ENCODE measurements at regions of chr7 and their contacts with region 1.

Region 1: GRCh38 chr7:7968543-7969305 is at the start of gene GLCCI1:
- DNase-seq: peak; percentile 96 to 98 (median 96)
- H3K4me3 ChIP-seq: peak within 1 kb of the TSS; percentile 96 to 99
- H3K4me3 Mint-ChIP-seq: peak within 1 kb of the TSS; percentile 92 to 100 (median 98)
- H3K27ac ChIP-seq: peak within 1 kb of the TSS; percentile 79
- H3K27ac Mint-ChIP-seq: peak within 1 kb of the TSS; percentile 66 to 99 (median 96)
- H3K4me1 ChIP-seq: peaks cover 50% of the 10 kb centered on the region
- H3K4me1 Mint-ChIP-seq: peaks cover 18 to 29% (median 18%) of the 10 kb centered on the region in 4 donors
- H3K27me3 ChIP-seq: no peaks in the 10 kb centered on the region
- H3K27me3 Mint-ChIP-seq: no peaks in the 10 kb centered on the region
- total RNA-seq, gene GLCCI1: 46.7 to 49.7 TPM

Region 2: DNA sequence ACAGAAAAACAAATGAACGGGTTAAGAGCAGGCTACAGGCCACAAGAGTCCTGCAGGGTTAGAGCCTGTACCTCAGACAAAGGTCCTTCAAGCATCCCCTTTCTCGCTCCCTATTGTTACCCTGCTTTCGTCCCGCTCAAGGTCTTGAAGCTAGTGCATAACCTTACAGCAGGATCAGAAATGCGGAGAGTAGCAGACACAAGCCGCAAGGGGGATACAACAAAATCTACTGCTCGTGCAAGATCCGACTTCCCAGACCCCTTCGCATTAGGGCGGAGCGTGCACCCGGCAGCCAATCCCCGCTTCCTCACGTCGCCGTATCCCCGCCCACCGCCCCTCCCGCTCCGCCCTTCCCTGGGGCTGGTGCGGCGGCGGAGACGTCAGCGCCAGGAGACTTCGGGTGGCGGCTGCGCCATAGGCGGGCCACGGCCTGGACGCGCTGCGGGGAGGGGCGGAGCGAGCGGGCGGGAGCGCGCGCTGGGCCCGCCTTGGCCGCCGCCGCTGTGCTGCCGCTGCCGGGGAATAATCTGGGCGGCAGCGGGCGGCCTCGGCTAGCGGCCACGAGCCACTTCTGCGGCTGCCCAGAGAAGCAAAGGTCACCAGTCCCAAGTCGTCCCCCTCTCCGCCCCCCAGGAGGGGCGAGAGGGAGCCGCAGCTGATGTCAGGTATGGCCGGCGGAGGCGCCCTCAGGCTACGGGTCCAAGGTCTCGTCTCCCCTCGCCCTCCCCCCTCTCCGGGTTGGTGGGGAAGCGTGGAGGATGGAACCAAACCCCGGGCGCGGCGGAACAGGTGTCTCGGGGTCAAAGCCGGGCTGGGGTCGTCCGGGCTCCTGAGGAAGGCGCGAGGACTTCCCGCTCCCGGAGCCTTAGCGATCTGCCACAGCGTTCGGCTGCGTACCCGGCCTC is 786.3 kb before region 1 on chr7 and contains the start of gene C1GALT1:
- CTCF ChIA-PET with region 1: no interaction called
- POLR2A ChIA-PET with region 1: interaction called, 4 read pairs
- intact Hi-C with region 1: loop called (anchors 2 kb)
- DNase-seq: peak; percentile 97 to 99 (median 98)
- H3K4me3 ChIP-seq: peak within 1 kb of the TSS; percentile 55 to 60
- H3K4me3 Mint-ChIP-seq: peak within 1 kb of the TSS; percentile 83 to 99 (median 94)
- H3K27ac ChIP-seq: peak within 1 kb of the TSS; percentile 96
- H3K27ac Mint-ChIP-seq: peak within 1 kb of the TSS; percentile 94 to 98 (median 97)
- H3K4me1 ChIP-seq: peaks cover 50% of the 10 kb centered on the region
- H3K4me1 Mint-ChIP-seq: peaks cover 12 to 21% (median 17%) of the 10 kb centered on the region in 4 donors
- H3K27me3 ChIP-seq: no peaks in the 10 kb centered on the region
- H3K27me3 Mint-ChIP-seq: no peaks in the 10 kb centered on the region
- total RNA-seq, gene C1GALT1: 54.6 to 54.8 TPM

Region 3: GRCh38 chr7:7681179-7681935 is 287.4 kb before region 1 on chr7:
- CTCF ChIA-PET with region 1: interaction called, 9 read pairs
- POLR2A ChIA-PET with region 1: interaction called, 9 read pairs
- intact Hi-C with region 1: loop called (anchors 5 kb)
- DNase-seq: peak; percentile 47 to 62 (median 54)
- H3K4me3 ChIP-seq: no peak overlapping the region
- H3K4me3 Mint-ChIP-seq: peak overlapping the region in 3 of 8 donors; percentile 21 to 51 (median 35)
- H3K27ac ChIP-seq: no peak overlapping the region
- H3K27ac Mint-ChIP-seq: peak overlapping the region in 5 of 7 donors; percentile 41 to 59 (median 45)
- H3K4me1 ChIP-seq: peaks cover 15% of the 10 kb centered on the region
- H3K4me1 Mint-ChIP-seq: peaks cover 18 to 35% (median 24%) of the 10 kb centered on the region in 4 donors
- H3K27me3 ChIP-seq: no peaks in the 10 kb centered on the region
- H3K27me3 Mint-ChIP-seq: no peaks in the 10 kb centered on the region

Region 4: DNA sequence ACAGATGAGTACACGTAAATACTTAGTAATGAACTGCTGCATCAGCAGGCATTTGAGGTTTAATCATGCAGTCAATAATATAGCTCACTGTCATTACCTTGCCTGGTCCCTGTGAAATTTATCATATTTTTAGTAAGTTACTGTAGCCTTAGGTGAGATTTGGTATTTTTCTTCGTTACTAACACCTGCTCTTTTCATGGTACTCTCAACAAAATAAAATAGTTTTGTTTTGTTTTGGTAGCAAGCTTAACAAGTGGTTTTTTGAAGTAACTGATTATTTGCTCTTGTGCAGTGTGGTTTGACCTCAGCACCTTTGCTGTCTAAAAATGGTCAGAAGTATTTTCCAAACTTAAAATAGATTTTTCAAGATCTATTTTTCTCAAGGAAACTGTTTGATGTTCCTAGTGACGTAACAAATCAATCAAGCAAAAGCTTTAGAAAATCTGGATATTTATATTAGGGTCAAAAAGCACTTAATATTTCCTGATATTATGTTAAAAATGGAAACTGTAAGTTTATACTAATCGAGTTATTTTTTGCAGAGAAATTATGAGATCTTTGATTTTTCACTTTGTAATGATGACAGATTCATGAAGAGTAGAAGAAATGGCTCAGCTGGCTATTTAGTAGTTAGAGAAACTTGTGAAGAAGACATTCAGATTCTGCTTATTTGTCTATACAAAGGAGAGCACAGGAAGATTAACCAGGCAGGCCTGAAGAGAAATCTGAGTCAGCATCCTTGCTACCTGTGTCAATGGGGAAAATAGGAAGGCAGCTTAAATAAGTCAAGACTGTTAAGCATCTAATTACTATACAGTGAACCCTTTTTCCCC is 229.3 kb before region 1 on chr7:
- CTCF ChIA-PET with region 1: no interaction called
- POLR2A ChIA-PET with region 1: no interaction called
- intact Hi-C with region 1: no loop called
- DNase-seq: no peak
- H3K4me3 ChIP-seq: no peak overlapping the region
- H3K4me3 Mint-ChIP-seq: no peak overlapping the region
- H3K27ac ChIP-seq: no peak overlapping the region
- H3K27ac Mint-ChIP-seq: peak overlapping the region in 2 of 7 donors; percentile 6 to 71
- H3K4me1 ChIP-seq: no peaks in the 10 kb centered on the region
- H3K4me1 Mint-ChIP-seq: peaks cover 7 to 14% (median 11%) of the 10 kb centered on the region in 4 donors
- H3K27me3 ChIP-seq: no peaks in the 10 kb centered on the region
- H3K27me3 Mint-ChIP-seq: no peaks in the 10 kb centered on the region

Region 5: DNA sequence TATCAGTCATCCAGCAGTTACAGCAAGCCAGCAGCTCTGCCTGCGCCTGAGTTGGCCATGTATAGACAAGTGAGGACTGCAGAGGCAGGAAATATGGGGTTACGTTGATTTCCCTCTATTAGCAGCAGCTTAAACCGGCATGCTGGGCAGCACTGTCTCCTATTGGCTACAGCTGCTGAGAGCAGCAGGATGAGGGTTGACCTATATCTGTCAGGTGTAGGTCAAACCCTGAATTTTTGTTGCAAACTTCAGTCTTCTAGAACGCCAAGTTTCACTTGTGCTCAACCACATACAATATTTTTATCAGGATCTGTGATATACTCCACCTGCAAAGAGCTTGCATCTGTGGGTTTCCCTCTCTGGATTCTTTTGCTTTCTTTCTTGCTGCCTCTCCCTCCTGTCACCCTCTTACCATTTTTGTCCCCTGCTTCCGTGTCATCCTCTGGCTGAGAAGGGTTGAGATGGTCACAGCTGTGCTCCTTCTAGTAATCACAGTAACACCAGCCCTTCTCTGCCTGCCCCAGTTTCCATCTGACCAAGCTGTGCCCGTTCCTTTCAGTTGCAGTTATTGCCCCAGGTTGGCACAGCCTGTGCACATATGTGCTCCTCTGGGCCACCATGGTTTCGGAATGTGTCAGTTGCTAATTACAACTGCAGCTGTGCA is 24.0 kb before region 1 on chr7:
- CTCF ChIA-PET with region 1: interaction called, 6 read pairs
- POLR2A ChIA-PET with region 1: interaction called, 80 read pairs
- intact Hi-C with region 1: loop called (anchors 1 kb)
- DNase-seq: peak; percentile 64 to 77 (median 75)
- H3K4me3 ChIP-seq: peak overlapping the region; percentile 26 to 29
- H3K4me3 Mint-ChIP-seq: peak overlapping the region; percentile 70 to 89 (median 82)
- H3K27ac ChIP-seq: peak overlapping the region; percentile 59
- H3K27ac Mint-ChIP-seq: peak overlapping the region; percentile 78 to 97 (median 90)
- H3K4me1 ChIP-seq: peaks cover 42% of the 10 kb centered on the region
- H3K4me1 Mint-ChIP-seq: peaks cover 21 to 51% (median 28%) of the 10 kb centered on the region in 4 donors
- H3K27me3 ChIP-seq: no peaks in the 10 kb centered on the region
- H3K27me3 Mint-ChIP-seq: no peaks in the 10 kb centered on the region

Region 6: DNA sequence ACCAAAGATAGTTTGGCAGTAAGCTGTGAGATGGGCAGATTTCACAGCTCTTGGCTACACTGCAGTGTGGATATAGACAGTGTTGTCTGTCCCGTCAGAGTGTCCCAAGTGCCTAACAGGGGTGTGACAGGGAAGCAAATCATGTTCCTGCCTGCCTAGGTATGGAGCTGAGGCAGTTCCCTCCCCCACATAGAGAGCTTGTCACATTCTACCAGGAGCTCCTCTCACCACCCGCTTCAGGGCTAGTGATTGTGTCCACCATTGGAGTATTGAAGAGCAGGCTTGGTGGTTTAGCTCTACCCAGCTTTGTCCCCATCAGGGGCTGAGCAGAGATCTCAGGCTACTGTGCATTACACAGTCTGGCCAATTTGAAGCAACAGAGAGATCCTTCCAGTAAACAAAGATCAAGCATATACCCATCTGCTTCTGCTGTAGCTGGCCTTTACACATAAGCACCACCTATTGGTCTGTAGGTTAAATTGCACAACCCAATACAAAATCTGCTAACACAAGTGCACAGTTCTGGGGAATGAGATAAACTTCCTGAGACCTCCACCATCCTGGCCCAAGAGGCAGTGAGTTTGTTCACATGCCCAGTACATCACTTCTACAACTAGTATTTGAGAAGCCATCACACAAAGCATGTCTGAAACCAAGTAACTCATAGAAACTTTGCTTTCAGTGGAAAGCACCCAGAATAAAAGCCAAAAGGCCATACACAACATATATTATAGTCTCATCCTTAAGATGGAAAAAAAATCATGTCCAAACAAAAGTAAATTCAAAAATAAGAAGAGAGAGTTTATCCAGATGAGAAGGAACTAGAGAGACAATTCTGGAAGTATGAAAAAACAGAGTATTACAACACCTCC is 67.2 kb after region 1 on chr7:
- CTCF ChIA-PET with region 1: interaction called, 8 read pairs
- POLR2A ChIA-PET with region 1: interaction called, 40 read pairs
- intact Hi-C with region 1: loop called (anchors 5 kb)
- DNase-seq: peak in 4 of 5 donors; percentile 32 to 51 (median 41)
- H3K4me3 ChIP-seq: no peak overlapping the region
- H3K4me3 Mint-ChIP-seq: no peak overlapping the region
- H3K27ac ChIP-seq: no peak overlapping the region
- H3K27ac Mint-ChIP-seq: peak overlapping the region; percentile 16 to 86 (median 58)
- H3K4me1 ChIP-seq: peaks cover 20% of the 10 kb centered on the region
- H3K4me1 Mint-ChIP-seq: peaks cover 27 to 41% (median 30%) of the 10 kb centered on the region in 4 donors
- H3K27me3 ChIP-seq: no peaks in the 10 kb centered on the region
- H3K27me3 Mint-ChIP-seq: no peaks in the 10 kb centered on the region

Region 7: GRCh38 chr7:8143151-8143874 is 174.6 kb after region 1 on chr7:
- CTCF ChIA-PET with region 1: no interaction called
- POLR2A ChIA-PET with region 1: interaction called, 11 read pairs
- intact Hi-C with region 1: no loop called
- DNase-seq: peak in 1 of 5 donors; percentile 40
- H3K4me3 ChIP-seq: peak overlapping the region in 1 of 2 donors; percentile 17
- H3K4me3 Mint-ChIP-seq: peak overlapping the region in 7 of 8 donors; percentile 50 to 69 (median 60)
- H3K27ac ChIP-seq: peak overlapping the region; percentile 54
- H3K27ac Mint-ChIP-seq: peak overlapping the region; percentile 70 to 95 (median 88)
- H3K4me1 ChIP-seq: peaks cover 68% of the 10 kb centered on the region
- H3K4me1 Mint-ChIP-seq: peaks cover 35 to 70% (median 42%) of the 10 kb centered on the region in 4 donors
- H3K27me3 ChIP-seq: no peaks in the 10 kb centered on the region
- H3K27me3 Mint-ChIP-seq: no peaks in the 10 kb centered on the region

Measured in CD4-positive, alpha-beta memory T cell (primary cell).